Activated CD4-positive, alpha-beta T cell treated with anti-CD3 and anti-CD28 coated beads for 36 hours (primary cell): ENCODE measurements at regions of chr22 and their contacts with region 1.

Region 1: GRCh38 chr22:29387921-29388758 is at the start of gene AP1B1:
- DNase-seq: peak; percentile 97
- ATAC-seq: peak; percentile 99
- H3K4me3 Mint-ChIP-seq: peak within 1 kb of the TSS; percentile 87
- H3K27ac Mint-ChIP-seq: peak within 1 kb of the TSS; percentile 83
- H3K4me1 Mint-ChIP-seq: peaks cover 30% of the 10 kb centered on the region
- H3K27me3 Mint-ChIP-seq: no peaks in the 10 kb centered on the region
- total RNA-seq, gene AP1B1: 56.6 to 59.9 TPM

Region 2: GRCh38 chr22:29400576-29400975 is 12.4 kb after region 1 on chr22:
- CTCF ChIA-PET with region 1: no interaction called
- POLR2A ChIA-PET with region 1: no interaction called
- intact Hi-C with region 1: no loop called
- DNase-seq: no peak
- ATAC-seq: no peak
- H3K4me3 Mint-ChIP-seq: no peak overlapping the region
- H3K27ac Mint-ChIP-seq: no peak overlapping the region
- H3K4me1 Mint-ChIP-seq: no peaks in the 10 kb centered on the region
- H3K27me3 Mint-ChIP-seq: no peaks in the 10 kb centered on the region

Region 3: DNA sequence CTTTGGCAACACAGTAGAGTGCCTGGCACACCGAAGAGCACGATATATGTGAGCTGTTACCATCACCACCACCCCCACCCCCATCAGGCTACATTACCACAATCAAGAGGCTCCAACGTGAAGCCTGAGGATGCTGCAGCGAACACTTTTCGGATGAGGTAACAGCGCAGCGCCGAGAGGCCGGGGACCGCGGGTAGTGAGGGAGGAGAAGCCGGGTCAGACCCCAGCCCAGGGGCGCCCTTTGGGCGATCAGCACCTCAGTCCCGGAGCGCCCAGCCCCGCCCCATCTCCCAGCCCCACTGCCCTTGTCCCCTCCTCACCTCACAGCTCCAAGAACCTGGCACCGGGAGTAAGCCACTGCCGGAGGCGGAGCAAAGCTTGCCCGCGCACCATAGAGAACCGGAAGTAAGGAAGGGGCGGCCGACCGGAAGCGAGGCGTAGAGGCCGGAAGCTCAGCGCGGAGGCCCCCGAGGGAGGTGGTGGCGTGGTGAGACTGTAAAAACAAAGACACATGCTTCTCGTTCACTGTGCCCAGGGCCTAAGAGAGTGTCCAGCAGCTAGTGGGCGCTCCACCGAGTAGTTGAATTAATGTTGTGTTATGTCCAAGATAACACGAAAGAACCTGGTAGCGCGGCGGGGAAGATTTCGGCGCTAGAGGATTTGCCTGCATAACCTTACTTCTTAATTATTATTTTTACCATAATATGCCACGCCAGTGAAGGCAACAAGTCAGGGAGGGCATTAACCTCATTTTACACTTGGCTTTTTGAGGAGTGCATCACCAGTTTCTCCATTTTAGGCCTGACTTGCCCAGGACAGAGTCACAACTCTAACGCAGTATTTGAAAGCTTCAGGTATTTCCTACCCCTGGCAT is 165.4 kb after region 1 on chr22 and contains the start of gene THOC5:
- CTCF ChIA-PET with region 1: no interaction called
- POLR2A ChIA-PET with region 1: interaction called, 7 read pairs
- intact Hi-C with region 1: loop called in 1 of 2 experiments (anchors 1 kb)
- DNase-seq: peak; percentile 94
- ATAC-seq: peak; percentile 99
- H3K4me3 Mint-ChIP-seq: peak within 1 kb of the TSS; percentile 96
- H3K27ac Mint-ChIP-seq: peak within 1 kb of the TSS; percentile 92
- H3K4me1 Mint-ChIP-seq: peaks cover 13% of the 10 kb centered on the region
- H3K27me3 Mint-ChIP-seq: no peaks in the 10 kb centered on the region
- total RNA-seq, gene THOC5: 52.4 to 65.7 TPM